Activated CD8-positive, alpha-beta T cell treated with anti-CD3 and anti-CD28 coated beads for 36 hours (primary cell): ENCODE measurements at regions of chr14 and their contacts with region 1.

Region 1: GRCh38 chr14:35229495-35230089 is 62.6 kb upstream of the PSMA6 start:
- DNase-seq: no peak
- ATAC-seq: peak; percentile 74
- H3K4me3 Mint-ChIP-seq: no peak overlapping the region
- H3K27ac Mint-ChIP-seq: no peak overlapping the region
- H3K4me1 Mint-ChIP-seq: peaks cover 16% of the 10 kb centered on the region
- H3K27me3 Mint-ChIP-seq: no peaks in the 10 kb centered on the region
- CTCF ChIP-seq: peak; percentile 65

Region 2: GRCh38 chr14:35155962-35156361 is 73.6 kb before region 1 on chr14:
- CTCF ChIA-PET with region 1: interaction called, 10 read pairs
- POLR2A ChIA-PET with region 1: no interaction called
- intact Hi-C with region 1: no loop called
- DNase-seq: no peak
- ATAC-seq: no peak
- H3K4me3 Mint-ChIP-seq: no peak overlapping the region
- H3K27ac Mint-ChIP-seq: peak overlapping the region; percentile 58
- H3K4me1 Mint-ChIP-seq: peaks cover 35% of the 10 kb centered on the region
- H3K27me3 Mint-ChIP-seq: no peaks in the 10 kb centered on the region
- CTCF ChIP-seq: no peak

Region 3: DNA sequence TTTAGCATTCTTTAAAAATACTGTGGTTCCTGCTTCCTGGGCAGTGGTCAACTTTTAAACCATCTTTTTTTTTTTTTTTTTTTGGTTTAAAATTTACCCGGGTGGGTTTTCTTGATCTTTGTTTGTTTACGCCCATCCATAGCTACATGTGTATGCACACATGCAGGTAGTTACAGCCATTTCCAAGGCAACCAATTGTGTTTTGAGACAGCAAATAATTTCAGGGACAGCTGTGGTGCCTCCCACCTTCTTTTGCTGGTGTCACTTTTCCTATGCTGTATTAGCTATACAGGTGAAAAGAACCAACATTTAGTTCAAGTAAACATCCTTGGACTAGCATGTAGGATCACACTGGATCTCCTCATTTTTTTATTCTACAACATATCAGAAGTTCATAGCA is 10.6 kb after region 1 on chr14:
- CTCF ChIA-PET with region 1: interaction called, 12 read pairs
- POLR2A ChIA-PET with region 1: no interaction called
- intact Hi-C with region 1: no loop called
- DNase-seq: no peak
- ATAC-seq: no peak
- H3K4me3 Mint-ChIP-seq: no peak overlapping the region
- H3K27ac Mint-ChIP-seq: no peak overlapping the region
- H3K4me1 Mint-ChIP-seq: peaks cover 10% of the 10 kb centered on the region
- H3K27me3 Mint-ChIP-seq: no peaks in the 10 kb centered on the region
- CTCF ChIP-seq: no peak

Region 4: DNA sequence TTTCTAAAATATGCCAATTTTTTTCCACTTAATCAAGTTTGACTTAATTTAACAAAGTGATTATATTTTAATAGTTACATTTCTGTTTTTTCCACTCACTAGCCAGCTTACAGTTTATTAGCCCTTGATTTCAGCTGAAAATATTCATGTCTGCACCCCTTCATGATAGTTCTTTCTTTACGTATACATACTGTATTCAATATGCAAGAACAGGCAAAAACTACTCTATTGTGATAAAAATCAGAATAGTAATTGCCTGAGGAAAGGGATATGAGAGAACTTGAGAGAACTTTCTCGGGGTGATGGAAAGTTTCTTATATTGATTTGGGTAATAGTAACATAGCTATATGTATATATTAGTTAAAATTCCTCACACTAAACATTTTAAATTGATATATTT is 45.2 kb after region 1 on chr14:
- CTCF ChIA-PET with region 1: no interaction called
- POLR2A ChIA-PET with region 1: no interaction called
- intact Hi-C with region 1: no loop called
- DNase-seq: no peak
- ATAC-seq: no peak
- H3K4me3 Mint-ChIP-seq: no peak overlapping the region
- H3K27ac Mint-ChIP-seq: no peak overlapping the region
- H3K4me1 Mint-ChIP-seq: no peaks in the 10 kb centered on the region
- H3K27me3 Mint-ChIP-seq: no peaks in the 10 kb centered on the region
- CTCF ChIP-seq: no peak

Region 5: GRCh38 chr14:35292051-35292769 is 62.6 kb after region 1 on chr14 and contains the start of gene PSMA6:
- CTCF ChIA-PET with region 1: interaction called, 11 read pairs
- POLR2A ChIA-PET with region 1: no interaction called
- intact Hi-C with region 1: no loop called
- DNase-seq: peak; percentile 99
- ATAC-seq: peak; percentile 92
- H3K4me3 Mint-ChIP-seq: peak within 1 kb of the TSS; percentile 97
- H3K27ac Mint-ChIP-seq: peak within 1 kb of the TSS; percentile 98
- H3K4me1 Mint-ChIP-seq: peaks cover 50% of the 10 kb centered on the region
- H3K27me3 Mint-ChIP-seq: no peaks in the 10 kb centered on the region
- CTCF ChIP-seq: no peak
- total RNA-seq, gene PSMA6: 361 to 393 TPM

Region 6: GRCh38 chr14:35331605-35332516 is 102.3 kb after region 1 on chr14:
- CTCF ChIA-PET with region 1: interaction called, 17 read pairs
- POLR2A ChIA-PET with region 1: no interaction called
- intact Hi-C with region 1: no loop called
- DNase-seq: no peak
- ATAC-seq: no peak
- H3K4me3 Mint-ChIP-seq: no peak overlapping the region
- H3K27ac Mint-ChIP-seq: peak overlapping the region; percentile 95
- H3K4me1 Mint-ChIP-seq: peaks cover 30% of the 10 kb centered on the region
- H3K27me3 Mint-ChIP-seq: no peaks in the 10 kb centered on the region
- CTCF ChIP-seq: no peak